Heart left ventricle (tissue), 16 donors: ENCODE measurements at regions of chr1 and their contacts with region 1.

Region 1: DNA sequence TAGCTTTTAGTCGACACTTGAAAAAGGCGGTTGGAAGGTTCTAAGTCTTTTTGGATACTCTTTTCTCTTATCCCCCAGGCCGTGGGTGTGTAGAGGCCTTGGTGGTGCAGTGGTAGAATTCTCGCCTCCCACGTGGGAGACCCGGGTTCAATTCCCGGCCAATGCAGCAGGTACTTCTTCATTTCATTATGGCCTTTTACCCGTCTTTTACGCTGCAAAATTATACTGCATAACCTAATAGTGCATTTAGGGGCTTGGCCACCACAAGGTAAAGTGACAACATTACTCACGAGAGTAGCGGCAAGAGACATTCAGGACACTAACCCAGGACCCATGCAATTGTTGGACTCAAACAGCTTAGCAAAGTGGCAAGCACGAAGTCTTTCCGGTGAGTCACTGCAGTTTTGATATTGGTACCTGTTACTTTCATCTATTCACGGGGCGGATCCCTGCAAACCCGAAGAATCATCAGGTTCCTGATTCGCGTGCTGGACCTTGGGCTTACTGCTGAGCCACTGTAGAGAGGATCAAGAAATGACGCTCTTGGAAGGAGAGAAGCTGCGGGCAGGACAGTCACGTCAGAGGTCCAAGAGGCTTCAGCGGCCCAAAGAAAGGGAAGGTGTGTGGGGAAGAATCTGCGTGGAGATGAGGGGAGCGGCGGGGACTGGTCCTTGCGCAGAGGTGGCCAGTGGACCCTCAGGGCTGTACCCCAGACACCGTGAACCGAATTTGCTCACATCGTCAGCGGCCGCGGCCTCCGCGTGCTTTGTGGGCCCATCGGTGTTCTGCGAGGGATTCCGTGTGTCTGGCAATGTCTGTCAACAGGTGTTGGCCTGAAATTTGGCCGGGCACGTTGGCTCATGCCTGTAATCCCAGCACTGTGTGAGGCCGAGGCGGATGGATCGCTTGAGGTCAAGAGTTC is 12.9 kb upstream of the RNU1-4 start:
- DNase-seq: peak in 2 of 5 donors; percentile 33 to 75
- ATAC-seq: peak in 3 of 4 donors; percentile 26 to 66 (median 42)
- H3K4me3 ChIP-seq: no peak overlapping the region
- H3K27ac ChIP-seq: no peak overlapping the region
- H3K4me1 ChIP-seq: no peaks in the 10 kb centered on the region
- H3K27me3 ChIP-seq: peaks cover 5 to 44% (median 25%) of the 10 kb centered on the region in 9 donors
- CTCF ChIP-seq: no peak
- POLR2A ChIP-seq: no peak

Region 2: GRCh38 chr1:16351994-16352841 is 375.2 kb before region 1 on chr1 and contains the start of gene FBXO42:
- intact Hi-C with region 1: no loop called
- DNase-seq: peak; percentile 92 to 96 (median 93)
- ATAC-seq: peak; percentile 90 to 98 (median 97)
- H3K4me3 ChIP-seq: peak within 1 kb of the TSS; percentile 70 to 99 (median 88)
- H3K27ac ChIP-seq: peak within 1 kb of the TSS; percentile 87 to 97 (median 94)
- H3K4me1 ChIP-seq: peaks cover 5 to 36% (median 26%) of the 10 kb centered on the region in 12 donors
- H3K27me3 ChIP-seq: no peaks in the 10 kb centered on the region
- CTCF ChIP-seq: peak in 11 of 12 donors; percentile 23 to 78 (median 54)
- POLR2A ChIP-seq: peak in 1 of 2 donors; percentile 96
- total RNA-seq, gene FBXO42: 15.4 to 44.4 (median 22.9) TPM

Region 3: GRCh38 chr1:16607433-16607851 is 120.0 kb before region 1 on chr1:
- intact Hi-C with region 1: loop called in 1 of 10 experiments (anchors 10 kb)
- DNase-seq: peak in 1 of 5 donors; percentile 55
- ATAC-seq: peak in 1 of 4 donors; percentile 31
- H3K4me3 ChIP-seq: no peak overlapping the region
- H3K27ac ChIP-seq: no peak overlapping the region
- H3K4me1 ChIP-seq: peaks cover 3 to 10% (median 7%) of the 10 kb centered on the region in 12 donors
- H3K27me3 ChIP-seq: peaks cover 0 to 4% (median 0%) of the 10 kb centered on the region in 9 donors
- CTCF ChIP-seq: no peak
- POLR2A ChIP-seq: no peak

Region 4: GRCh38 chr1:16631248-16632043 is 96.0 kb before region 1 on chr1:
- intact Hi-C with region 1: loop called in 1 of 10 experiments (anchors 10 kb)
- DNase-seq: peak in 4 of 5 donors; percentile 24 to 75 (median 34)
- ATAC-seq: peak in 1 of 4 donors; percentile 2
- H3K4me3 ChIP-seq: no peak overlapping the region
- H3K27ac ChIP-seq: no peak overlapping the region
- H3K4me1 ChIP-seq: peaks cover 0 to 4% (median 0%) of the 10 kb centered on the region in 12 donors
- H3K27me3 ChIP-seq: no peaks in the 10 kb centered on the region
- CTCF ChIP-seq: no peak
- POLR2A ChIP-seq: no peak

Region 5: GRCh38 chr1:16921391-16922185 is 194.1 kb after region 1 on chr1 and contains the start of gene CROCC:
- intact Hi-C with region 1: loop called in 1 of 10 experiments (anchors 10 kb)
- DNase-seq: peak in 3 of 5 donors; percentile 33 to 69 (median 42)
- ATAC-seq: peak in 3 of 4 donors; percentile 5 to 40 (median 28)
- H3K4me3 ChIP-seq: no peak within 1 kb of the TSS
- H3K27ac ChIP-seq: no peak within 1 kb of the TSS
- H3K4me1 ChIP-seq: peaks cover 0 to 16% (median 9%) of the 10 kb centered on the region in 12 donors
- H3K27me3 ChIP-seq: no peaks in the 10 kb centered on the region
- CTCF ChIP-seq: no peak
- POLR2A ChIP-seq: no peak
- total RNA-seq, gene CROCC: 3.9 to 12.5 (median 6.7) TPM